Left cardiac atrium (tissue), 4 donors: ENCODE measurements at regions of chr10 and their contacts with region 1.

Region 1: DNA sequence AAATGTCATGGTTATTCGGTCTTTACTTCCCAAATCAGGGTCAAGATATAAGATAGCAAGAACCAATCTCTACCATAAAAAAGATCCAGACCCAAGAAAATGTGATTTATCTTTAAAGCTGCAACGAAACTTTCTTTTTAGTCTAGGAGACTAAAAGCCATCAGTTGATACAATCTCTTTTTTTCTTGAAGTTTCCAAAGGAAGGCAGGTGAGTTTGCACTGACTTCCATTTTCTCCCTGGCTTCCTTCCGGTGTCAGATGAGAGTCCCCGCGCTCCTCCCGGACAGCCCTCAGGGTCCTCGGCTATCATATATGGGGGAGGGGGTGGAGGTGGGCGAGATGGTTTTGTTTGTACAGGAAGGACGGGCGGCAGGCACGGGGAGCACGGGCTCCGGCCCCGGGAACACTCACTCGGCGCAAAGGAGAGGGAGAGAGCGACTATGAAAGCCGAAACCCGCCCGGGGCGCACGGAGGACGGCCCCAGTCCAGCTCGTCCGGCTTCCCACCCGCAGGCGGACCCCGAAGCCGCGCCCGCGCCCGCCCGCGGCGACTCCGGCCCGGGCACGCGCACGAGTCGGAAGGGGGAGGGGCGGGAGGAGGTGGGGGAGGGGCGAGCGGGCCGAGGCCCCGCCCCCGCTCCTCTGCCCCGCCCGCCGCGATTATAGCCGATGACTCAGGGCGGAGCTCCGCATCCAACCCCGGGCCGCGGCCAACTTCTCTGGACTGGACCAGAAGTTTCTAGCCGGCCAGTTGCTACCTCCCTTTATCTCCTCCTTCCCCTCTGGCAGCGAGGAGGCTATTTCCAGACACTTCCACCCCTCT is at the start of gene BAG3:
- DNase-seq: peak; percentile 98
- ATAC-seq: peak; percentile 92 to 93
- total RNA-seq, gene BAG3: 113 to 114 TPM

Region 2: DNA sequence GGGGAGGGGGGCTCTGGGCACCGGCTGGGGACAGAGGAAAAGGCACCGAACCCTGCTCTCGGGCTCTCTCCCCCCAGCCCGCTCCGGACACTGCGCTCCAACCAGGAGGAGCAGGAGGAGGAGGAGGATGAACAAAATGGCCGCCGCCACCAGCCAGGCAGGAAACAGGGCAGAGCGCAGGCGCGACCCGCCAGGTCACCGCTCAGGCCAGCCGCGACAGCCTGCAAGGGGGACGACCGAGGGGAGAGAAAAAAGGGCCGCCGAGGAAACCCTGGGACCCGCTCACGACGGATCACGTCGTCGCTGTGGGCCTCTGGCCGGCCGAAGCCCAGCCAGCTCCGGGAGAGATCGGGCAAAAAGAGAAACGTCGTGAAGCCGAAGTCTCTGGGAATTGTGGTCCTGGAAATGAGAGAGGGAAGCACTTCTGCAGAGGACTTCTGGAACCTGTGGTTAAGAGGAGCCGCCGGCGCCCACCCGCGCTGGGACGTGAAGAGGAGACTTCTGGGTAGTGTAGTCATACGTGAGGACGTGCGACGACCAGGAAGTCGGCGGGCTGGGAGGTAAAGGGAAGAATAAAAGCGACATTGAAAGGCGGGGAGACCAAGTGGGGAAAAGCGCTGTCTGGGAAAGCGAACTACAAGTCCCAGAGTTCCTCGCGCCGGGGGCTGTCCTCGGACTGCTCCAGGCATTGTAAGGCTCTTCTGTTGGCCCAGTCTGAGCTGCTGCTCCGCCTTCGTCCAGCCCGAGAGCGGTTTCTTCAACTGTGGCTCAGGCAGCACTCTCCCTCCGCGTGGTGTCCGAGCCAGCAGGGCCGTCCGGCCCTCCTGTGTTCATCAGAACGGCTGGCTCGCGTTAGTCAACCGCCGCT is 54.1 kb before region 1 on chr10 and contains the start of gene TIAL1:
- intact Hi-C with region 1: loop called in 1 of 2 experiments (anchors 5 kb)
- DNase-seq: peak; percentile 99
- ATAC-seq: peak; percentile 92 to 95
- total RNA-seq, gene TIAL1: 69.6 to 70.2 TPM